Thyroid gland (tissue), 4 donors: ENCODE measurements at regions of chr6 and their contacts with region 1.

Region 1: DNA sequence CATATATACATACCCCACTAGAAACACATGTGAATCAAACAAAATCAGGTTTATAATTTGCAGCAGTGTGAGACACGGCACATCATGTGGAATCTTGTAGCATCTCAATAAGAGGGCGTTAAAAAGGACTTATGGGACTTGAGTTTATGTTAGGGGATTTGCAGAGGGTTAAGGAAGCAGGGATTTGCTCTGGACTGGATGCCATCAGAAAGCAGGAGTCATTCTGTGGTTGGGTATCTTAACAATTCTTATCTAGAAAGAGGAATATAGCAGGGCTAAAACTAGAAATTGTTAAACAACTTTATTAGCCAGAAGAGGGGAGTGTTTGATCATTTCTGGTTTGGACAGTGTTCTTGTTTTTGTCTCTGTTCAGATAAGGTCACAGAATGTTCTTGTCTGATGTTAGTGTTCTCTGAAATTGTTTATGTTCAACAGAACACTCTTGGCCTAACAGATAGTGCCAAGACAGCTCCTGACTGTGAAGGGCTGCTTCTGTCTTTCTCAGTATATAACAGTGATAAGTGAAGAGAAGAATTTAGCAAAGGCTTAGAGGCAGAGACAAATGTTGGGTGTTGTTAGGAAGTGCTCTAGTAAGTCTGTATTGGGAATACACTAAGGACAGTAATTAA is 39.2 kb downstream of the LIN28B start:
- DNase-seq: peak; percentile 8 to 10
- H3K4me3 ChIP-seq: no peak overlapping the region
- H3K27ac ChIP-seq: peak overlapping the region; percentile 13 to 61 (median 58)
- H3K4me1 ChIP-seq: peaks cover 13 to 19% of the 10 kb centered on the region in 2 donors
- H3K27me3 ChIP-seq: no peaks in the 10 kb centered on the region
- CTCF ChIP-seq: peak in 4 of 6 experiments; percentile 35 to 88 (median 66)
- POLR2A ChIP-seq: peak in 1 of 2 donors; percentile 43

Region 2: GRCh38 chr6:104768906-104769305 is 227.2 kb before region 1 on chr6:
- intact Hi-C with region 1: no loop called
- DNase-seq: no peak
- H3K4me3 ChIP-seq: no peak overlapping the region
- H3K27ac ChIP-seq: no peak overlapping the region
- H3K4me1 ChIP-seq: no peaks in the 10 kb centered on the region
- H3K27me3 ChIP-seq: no peaks in the 10 kb centered on the region
- CTCF ChIP-seq: no peak
- POLR2A ChIP-seq: no peak

Region 3: GRCh38 chr6:105077596-105078385 is 81.7 kb after region 1 on chr6:
- intact Hi-C with region 1: loop called (anchors 5 kb)
- DNase-seq: no peak
- H3K4me3 ChIP-seq: no peak overlapping the region
- H3K27ac ChIP-seq: no peak overlapping the region
- H3K4me1 ChIP-seq: no peaks in the 10 kb centered on the region
- H3K27me3 ChIP-seq: no peaks in the 10 kb centered on the region
- CTCF ChIP-seq: peak; percentile 33 to 88 (median 48)
- POLR2A ChIP-seq: no peak